HEK293T (cell line): ENCODE measurements at regions of chr5 and their contacts with region 1.

Region 1: GRCh38 chr5:123423278-123424149 is at the start of gene CEP120:
- DNase-seq: peak; percentile 95

Region 2: DNA sequence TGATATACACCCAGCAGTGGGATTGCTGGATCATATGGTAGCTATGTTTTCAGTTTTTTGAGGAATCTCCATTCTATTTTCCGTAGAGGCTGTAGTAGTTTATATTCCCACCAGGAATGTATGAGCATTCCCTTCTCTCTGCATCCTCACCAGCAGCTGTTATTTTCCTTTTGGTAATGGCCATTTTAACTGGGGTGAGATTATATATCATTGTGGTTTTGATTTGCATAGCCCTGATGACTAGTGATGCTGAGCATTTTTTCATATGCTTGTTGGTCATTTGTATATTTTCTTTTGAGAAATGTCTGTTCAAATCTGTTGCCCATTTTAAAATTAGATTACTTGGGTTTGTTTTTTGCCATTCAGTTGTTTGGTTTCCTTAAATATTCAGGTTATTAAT is 375.8 kb before region 1 on chr5:
- CTCF ChIA-PET with region 1: no interaction called
- POLR2A ChIA-PET with region 1: no interaction called
- DNase-seq: no peak

Region 3: DNA sequence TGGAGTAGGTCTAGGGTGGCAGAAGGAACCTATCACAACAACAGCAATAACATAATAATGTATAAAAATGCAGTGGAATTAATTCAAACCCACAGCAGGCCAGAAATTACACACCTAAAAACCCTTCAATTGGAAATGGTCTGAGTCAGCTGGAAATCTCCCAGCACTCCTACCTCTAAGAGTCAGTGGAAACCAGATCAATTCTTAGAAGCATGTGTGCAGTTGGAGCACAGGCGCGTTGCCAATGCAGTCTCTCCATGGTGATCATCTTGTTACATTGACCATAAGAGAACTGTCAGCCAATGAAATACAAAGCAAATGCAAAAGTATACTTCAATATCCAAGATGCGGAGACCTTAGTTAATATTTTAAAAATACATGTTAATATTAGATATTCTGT is 73.4 kb after region 1 on chr5:
- CTCF ChIA-PET with region 1: no interaction called
- POLR2A ChIA-PET with region 1: no interaction called
- DNase-seq: no peak

Region 4: DNA sequence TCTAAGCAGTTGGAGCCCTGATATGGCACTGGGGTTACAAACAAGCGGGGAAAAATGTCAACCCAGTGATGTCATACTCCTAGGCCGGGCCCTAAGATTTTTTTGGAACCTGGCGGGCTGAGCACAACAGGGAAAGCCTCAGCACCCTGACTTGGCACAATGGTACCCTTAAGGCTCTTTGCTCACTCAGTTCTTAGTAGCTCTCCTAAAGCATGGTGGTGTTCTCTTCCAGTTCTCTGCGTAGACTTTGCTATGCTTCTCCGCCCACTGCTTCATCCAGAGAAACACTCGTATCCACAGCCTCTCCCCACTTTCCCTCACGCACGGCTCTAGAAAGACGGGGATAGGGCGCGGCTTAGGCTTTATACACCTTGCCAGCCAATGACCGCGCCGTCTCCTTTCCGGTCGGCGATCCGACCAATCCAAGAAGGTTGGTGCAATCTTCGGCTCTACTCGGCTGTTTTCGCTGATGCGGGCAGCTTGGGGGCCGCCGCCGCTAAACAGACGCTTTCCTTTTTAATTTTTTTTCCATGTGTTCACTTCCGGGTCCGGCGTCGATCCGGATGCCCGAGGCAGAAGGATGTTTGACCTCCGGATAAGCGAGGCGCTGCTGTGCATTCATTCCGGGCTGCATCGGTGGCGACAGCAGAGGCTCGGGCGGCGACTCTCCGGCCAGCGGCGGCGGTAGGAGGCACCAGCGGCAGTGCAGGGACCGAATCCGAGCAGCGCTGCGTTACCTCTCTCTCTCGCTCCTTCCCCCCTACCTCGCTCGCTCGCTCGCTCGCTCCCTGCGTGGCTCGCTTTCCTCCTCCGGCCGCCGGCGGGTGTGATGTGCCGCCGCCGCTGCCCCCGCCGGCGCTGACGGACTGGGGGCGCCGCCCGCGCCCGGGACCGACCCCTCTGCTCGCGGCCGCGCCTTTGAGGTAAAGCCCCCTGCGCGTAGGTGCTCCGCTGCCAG is 88.4 kb after region 1 on chr5 and contains the start of gene CSNK1G3:
- CTCF ChIA-PET with region 1: interaction called, 7 read pairs
- POLR2A ChIA-PET with region 1: interaction called, 41 read pairs
- DNase-seq: peak; percentile 95

Region 5: DNA sequence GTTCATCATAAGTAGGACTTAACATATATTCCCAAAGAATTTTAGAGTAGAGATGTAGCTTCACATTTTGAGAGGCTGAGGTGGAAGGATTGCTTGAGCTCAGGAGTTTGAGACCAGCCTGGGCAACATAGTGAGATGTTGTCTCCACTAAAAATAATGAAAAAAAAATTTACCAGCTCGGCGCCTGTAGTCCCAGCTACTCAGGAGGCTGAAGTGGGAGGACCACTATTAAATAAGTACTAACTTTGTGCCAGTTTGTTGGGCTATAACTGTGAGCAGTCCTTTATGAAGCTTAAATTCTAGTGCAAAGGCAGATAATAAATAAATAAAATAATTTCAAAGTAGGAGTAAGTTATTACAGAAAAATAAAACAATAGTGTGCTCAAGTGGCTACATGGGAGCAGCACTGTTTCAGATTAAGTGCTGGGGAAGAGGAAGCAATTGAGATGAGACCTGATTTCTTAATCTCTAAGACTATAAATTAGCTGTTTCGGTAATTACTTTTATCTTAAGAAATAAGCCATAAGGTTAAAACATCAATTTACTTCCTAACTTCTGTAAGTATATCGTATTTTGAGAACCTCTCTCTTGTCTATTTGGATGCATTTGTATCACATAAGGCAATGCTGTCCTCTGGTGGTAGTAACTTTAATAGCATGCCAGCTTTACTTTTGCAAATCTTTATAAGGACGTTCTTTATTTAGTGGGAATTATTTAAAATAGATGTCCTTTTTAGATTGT is 187.3 kb after region 1 on chr5:
- CTCF ChIA-PET with region 1: interaction called, 10 read pairs
- POLR2A ChIA-PET with region 1: interaction called, 6 read pairs
- DNase-seq: peak; percentile 35